Activated CD4-positive, alpha-beta T cell treated with anti-CD3 and anti-CD28 coated beads for 36 hours (primary cell): ENCODE measurements at regions of chr10 and their contacts with region 1.

Region 1: GRCh38 chr10:3867454-3868270 is 82.7 kb upstream of the KLF6 start:
- DNase-seq: peak; percentile 60
- ATAC-seq: peak; percentile 76
- H3K4me3 Mint-ChIP-seq: peak overlapping the region; percentile 10
- H3K27ac Mint-ChIP-seq: peak overlapping the region; percentile 81
- H3K4me1 Mint-ChIP-seq: peaks cover 69% of the 10 kb centered on the region
- H3K27me3 Mint-ChIP-seq: no peaks in the 10 kb centered on the region

Region 2: DNA sequence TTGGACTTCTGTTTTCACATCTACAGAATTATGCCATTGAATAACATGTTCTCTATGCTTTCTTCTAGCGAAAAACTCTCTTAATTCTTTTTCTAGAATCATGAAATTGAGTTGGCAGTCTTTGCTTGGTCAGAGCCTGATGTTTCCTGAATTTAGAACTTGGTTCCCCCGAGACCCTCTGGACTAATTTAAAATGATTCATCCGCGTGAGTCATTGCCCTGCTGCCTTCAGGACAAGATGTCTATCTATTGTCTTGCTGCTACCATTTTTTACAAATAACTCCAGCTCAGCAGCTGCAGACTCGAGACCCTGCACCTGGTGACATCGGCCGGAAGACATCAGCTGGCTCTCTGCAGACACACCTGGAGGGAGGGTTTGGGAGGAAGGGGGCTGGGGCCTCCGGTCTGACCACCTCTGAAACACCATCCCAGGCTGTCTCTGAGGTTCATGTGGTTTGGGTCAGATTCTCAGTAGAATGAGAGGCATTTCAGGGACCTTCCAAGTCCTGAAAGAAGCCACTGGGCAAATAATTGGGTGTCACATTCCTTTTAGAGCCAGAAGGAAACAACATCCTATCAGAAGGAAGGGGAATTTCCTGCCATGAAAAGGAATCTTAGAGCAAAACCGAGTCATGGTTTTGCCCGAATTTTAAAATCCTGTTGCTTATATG is 61.7 kb before region 1 on chr10:
- CTCF ChIA-PET with region 1: interaction called, 5 read pairs
- POLR2A ChIA-PET with region 1: interaction called, 32 read pairs
- intact Hi-C with region 1: loop called (anchors 1 kb)
- DNase-seq: peak; percentile 59
- ATAC-seq: no peak
- H3K4me3 Mint-ChIP-seq: peak overlapping the region; percentile 46
- H3K27ac Mint-ChIP-seq: no peak overlapping the region
- H3K4me1 Mint-ChIP-seq: peaks cover 63% of the 10 kb centered on the region
- H3K27me3 Mint-ChIP-seq: no peaks in the 10 kb centered on the region

Region 3: GRCh38 chr10:3835770-3836169 is 31.9 kb before region 1 on chr10:
- CTCF ChIA-PET with region 1: no interaction called
- POLR2A ChIA-PET with region 1: interaction called, 3 read pairs
- intact Hi-C with region 1: loop called in 1 of 2 experiments (anchors 1 kb)
- DNase-seq: no peak
- ATAC-seq: peak; percentile 7
- H3K4me3 Mint-ChIP-seq: no peak overlapping the region
- H3K27ac Mint-ChIP-seq: peak overlapping the region; percentile 61
- H3K4me1 Mint-ChIP-seq: peaks cover 63% of the 10 kb centered on the region
- H3K27me3 Mint-ChIP-seq: no peaks in the 10 kb centered on the region

Region 4: GRCh38 chr10:4201866-4202825 is 334.5 kb after region 1 on chr10:
- CTCF ChIA-PET with region 1: no interaction called
- POLR2A ChIA-PET with region 1: no interaction called
- intact Hi-C with region 1: no loop called
- DNase-seq: no peak
- ATAC-seq: no peak
- H3K4me3 Mint-ChIP-seq: no peak overlapping the region
- H3K27ac Mint-ChIP-seq: no peak overlapping the region
- H3K4me1 Mint-ChIP-seq: peaks cover 4% of the 10 kb centered on the region
- H3K27me3 Mint-ChIP-seq: no peaks in the 10 kb centered on the region

Region 5: DNA sequence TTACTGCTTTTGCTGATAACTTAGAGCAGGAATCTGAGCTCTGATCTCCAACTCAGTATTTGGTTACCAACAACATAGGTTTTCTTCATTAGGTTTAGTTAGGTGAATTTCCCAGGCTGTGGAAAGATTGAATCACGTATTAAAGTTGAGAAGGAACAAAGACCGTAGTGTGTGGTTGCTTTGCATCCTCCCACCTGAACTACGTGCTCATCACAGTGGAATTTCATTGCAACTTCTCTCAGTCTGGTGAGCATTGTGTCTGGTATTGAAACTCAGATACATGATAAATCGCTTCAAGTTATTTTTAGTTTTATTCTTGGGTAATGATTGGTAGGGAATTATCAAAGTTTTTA is 819.0 kb after region 1 on chr10:
- CTCF ChIA-PET with region 1: no interaction called
- POLR2A ChIA-PET with region 1: no interaction called
- intact Hi-C with region 1: loop called in 1 of 2 experiments (anchors 1 kb)
- DNase-seq: peak; percentile 46
- ATAC-seq: peak; percentile 92
- H3K4me3 Mint-ChIP-seq: no peak overlapping the region
- H3K27ac Mint-ChIP-seq: peak overlapping the region; percentile 64
- H3K4me1 Mint-ChIP-seq: peaks cover 31% of the 10 kb centered on the region
- H3K27me3 Mint-ChIP-seq: no peaks in the 10 kb centered on the region